ENCODE measurements at regions of chr3 and their contacts with region 1.

Region 1: DNA sequence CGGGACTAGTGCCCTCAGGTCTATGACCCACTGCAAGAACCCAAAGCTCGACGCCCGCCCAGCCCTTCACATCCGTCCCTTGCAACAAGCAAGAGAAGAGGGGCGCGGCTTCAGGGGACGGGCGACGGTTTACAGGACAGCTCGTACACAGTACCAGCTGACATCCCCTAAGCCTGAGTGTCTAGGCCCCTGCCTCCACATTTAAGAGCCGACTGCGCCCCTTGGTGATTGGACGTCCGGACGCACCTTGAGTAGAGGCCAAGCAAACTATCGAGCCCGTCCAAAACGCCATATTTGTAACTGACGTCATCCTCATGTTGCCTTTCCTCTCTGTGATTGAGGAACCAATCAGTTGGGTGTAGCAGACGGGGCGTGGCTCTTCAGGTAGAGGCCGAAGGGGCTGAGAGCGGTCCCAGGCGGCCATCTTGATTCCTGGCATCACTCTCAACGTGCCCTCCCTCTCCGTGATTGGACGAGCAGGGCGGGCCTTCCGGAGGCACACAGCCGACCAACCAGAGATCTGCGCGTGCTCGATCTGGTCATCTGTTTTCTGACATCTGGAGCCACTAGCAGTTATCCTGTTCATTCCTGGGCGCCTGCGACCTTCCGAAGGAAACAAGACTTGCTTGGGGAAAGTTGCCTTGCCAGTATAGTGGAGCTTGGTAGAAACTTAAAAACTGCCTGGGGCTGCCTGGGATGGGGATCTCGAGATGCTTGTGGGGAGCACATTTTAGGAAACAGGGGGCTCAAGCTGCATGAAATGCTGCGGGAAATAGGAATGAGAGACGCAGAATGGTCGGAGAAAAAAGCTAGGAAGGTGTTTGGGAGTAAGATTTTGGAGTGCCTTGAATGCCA is 4.0 kb upstream of the RPL14 start:
- DNase-seq: peak; percentile 95 to 97
- H3K4me3 ChIP-seq: peak overlapping the region; percentile 59
- H3K27ac ChIP-seq: peak overlapping the region; percentile 52
- H3K4me1 ChIP-seq: peaks cover 33% of the 10 kb centered on the region
- H3K27me3 ChIP-seq: no peaks in the 10 kb centered on the region
- CTCF ChIP-seq: no peak

Region 2: DNA sequence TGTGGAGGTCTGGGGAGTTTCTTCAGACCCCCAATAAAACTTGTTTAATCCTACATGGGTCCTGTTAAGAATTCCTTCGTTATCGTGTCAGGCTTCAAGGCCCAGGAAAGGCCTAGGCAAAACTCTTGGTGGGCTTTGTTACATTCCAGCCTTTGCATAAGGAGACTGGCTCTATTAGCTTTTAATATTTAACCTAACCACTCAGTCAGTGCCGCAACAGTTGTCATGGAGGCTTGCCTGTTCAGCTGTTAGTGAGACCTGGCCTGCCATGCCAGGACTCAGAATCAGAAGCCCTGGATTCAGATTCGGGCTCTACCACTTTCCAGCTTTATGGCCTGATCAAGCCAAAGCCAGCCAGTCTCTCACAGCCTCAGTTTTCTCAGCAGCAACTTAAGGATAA is 124.0 kb before region 1 on chr3:
- CTCF ChIA-PET with region 1: no interaction called
- POLR2A ChIA-PET with region 1: no interaction called
- intact Hi-C with region 1: loop called (anchors 5 kb)
- DNase-seq: no peak
- H3K4me3 ChIP-seq: no peak overlapping the region
- H3K27ac ChIP-seq: no peak overlapping the region
- H3K4me1 ChIP-seq: no peaks in the 10 kb centered on the region
- H3K27me3 ChIP-seq: no peaks in the 10 kb centered on the region
- CTCF ChIP-seq: no peak

Region 3: GRCh38 chr3:40432793-40433192 is 20.3 kb before region 1 on chr3:
- CTCF ChIA-PET with region 1: no interaction called
- POLR2A ChIA-PET with region 1: no interaction called
- intact Hi-C with region 1: no loop called
- DNase-seq: no peak
- H3K4me3 ChIP-seq: no peak overlapping the region
- H3K27ac ChIP-seq: no peak overlapping the region
- H3K4me1 ChIP-seq: no peaks in the 10 kb centered on the region
- H3K27me3 ChIP-seq: no peaks in the 10 kb centered on the region
- CTCF ChIP-seq: 0 out of 2 replicates have a peak, but pooled peaks have one; percentile 20